HepG2 (cell line): ENCODE measurements at regions of chr11 and their contacts with region 1.

Region 1: DNA sequence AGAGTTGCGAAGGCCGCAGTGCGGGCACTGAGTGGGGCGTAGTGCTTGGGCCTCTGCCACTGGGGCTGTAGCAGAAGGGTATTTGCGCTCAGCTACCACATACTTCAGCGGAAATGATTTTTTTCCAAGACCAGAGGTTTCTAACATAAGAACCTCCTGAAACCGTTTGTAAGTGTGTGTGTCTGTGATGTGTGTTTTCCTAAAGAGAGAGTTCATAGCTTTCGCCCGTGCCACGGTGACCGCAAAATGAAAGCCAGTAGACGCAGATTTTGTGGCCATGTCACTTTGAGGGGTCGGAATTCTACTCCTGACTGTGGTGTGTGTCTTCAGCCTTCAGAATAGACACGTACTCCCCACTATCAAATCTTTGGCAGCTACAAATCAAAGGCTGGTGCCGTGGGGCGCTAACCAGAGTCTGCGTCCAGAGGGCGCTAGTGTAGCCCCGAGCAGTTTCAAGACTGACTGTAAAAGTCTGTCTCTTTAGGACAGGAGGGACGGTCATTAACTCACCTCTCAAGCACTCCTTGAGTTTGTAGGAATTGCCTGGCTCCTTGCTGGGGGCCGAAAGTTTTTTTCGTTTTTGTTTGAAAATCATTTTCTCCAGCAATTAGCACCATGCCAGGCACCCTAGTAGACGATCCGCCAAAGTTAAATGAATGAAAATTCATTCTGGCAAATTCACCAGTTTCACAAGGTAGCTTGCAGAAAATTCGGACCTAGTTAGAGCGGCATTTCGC is 2.5 kb upstream of the CALCA start:
- DNase-seq: peak; percentile 16
- ATAC-seq: peak; percentile 85
- H3K4me3 ChIP-seq: no peak overlapping the region
- H3K27ac ChIP-seq: no peak overlapping the region
- H3K4me1 ChIP-seq: no peaks in the 10 kb centered on the region
- H3K27me3 ChIP-seq: peaks cover 2 to 41% of the 10 kb centered on the region in 2 experiments; a peak in 4 of 5 replicates
- CTCF ChIP-seq: peak; percentile 70
- EP300 ChIP-seq: no peak
- POLR2A ChIP-seq: no peak
- RAD21 ChIP-seq: peak; percentile 16; the same call in 1 of the 2 replicates

Region 2: GRCh38 chr11:14881576-14882193 is 93.0 kb before region 1 on chr11:
- CTCF ChIA-PET with region 1: no interaction called
- POLR2A ChIA-PET with region 1: no interaction called
- in situ Hi-C with region 1: no loop called
- intact Hi-C with region 1: no loop called
- DNase-seq: no peak
- ATAC-seq: no peak
- H3K4me3 ChIP-seq: no peak overlapping the region
- H3K27ac ChIP-seq: no peak overlapping the region
- H3K4me1 ChIP-seq: peaks cover 11% of the 10 kb centered on the region
- H3K27me3 ChIP-seq: no peaks in the 10 kb centered on the region
- CTCF ChIP-seq: no peak
- EP300 ChIP-seq: no peak
- POLR2A ChIP-seq: no peak
- RAD21 ChIP-seq: no peak

Region 3: GRCh38 chr11:14892036-14892567 is 82.6 kb before region 1 on chr11 and contains the start of gene CYP2R1:
- CTCF ChIA-PET with region 1: no interaction called
- POLR2A ChIA-PET with region 1: no interaction called
- in situ Hi-C with region 1: no loop called
- intact Hi-C with region 1: no loop called
- DNase-seq: peak; percentile 87
- ATAC-seq: peak; percentile 100
- H3K4me3 ChIP-seq: peak within 1 kb of the TSS; percentile 13 to 61 (median 42); a peak in 5 of 6 replicates
- H3K27ac ChIP-seq: no peak within 1 kb of the TSS
- H3K4me1 ChIP-seq: peaks cover 7% of the 10 kb centered on the region
- H3K27me3 ChIP-seq: 0 out of 5 replicates have a peak, but pooled peaks cover 0 to 1% of the 10 kb centered on the region in 2 experiments
- CTCF ChIP-seq: 0 out of 2 replicates have a peak, but pooled peaks have one; percentile 22
- EP300 ChIP-seq: no peak
- POLR2A ChIP-seq: no peak
- RAD21 ChIP-seq: no peak
- total RNA-seq, gene CYP2R1: 0.60 TPM in 1 of 2 replicates, not detected in the other

Region 4: GRCh38 chr11:14904745-14905103 is 70.0 kb before region 1 on chr11:
- CTCF ChIA-PET with region 1: no interaction called
- POLR2A ChIA-PET with region 1: no interaction called
- in situ Hi-C with region 1: no loop called
- intact Hi-C with region 1: no loop called
- DNase-seq: no peak
- ATAC-seq: no peak
- H3K4me3 ChIP-seq: no peak overlapping the region
- H3K27ac ChIP-seq: no peak overlapping the region
- H3K4me1 ChIP-seq: peaks cover 23% of the 10 kb centered on the region
- H3K27me3 ChIP-seq: no peaks in the 10 kb centered on the region
- CTCF ChIP-seq: peak; percentile 49
- EP300 ChIP-seq: no peak
- POLR2A ChIP-seq: no peak
- RAD21 ChIP-seq: no peak

Region 5: GRCh38 chr11:14942745-14943144 is 31.9 kb before region 1 on chr11:
- CTCF ChIA-PET with region 1: no interaction called
- POLR2A ChIA-PET with region 1: no interaction called
- in situ Hi-C with region 1: no loop called
- intact Hi-C with region 1: loop called (anchors 1 kb)
- DNase-seq: no peak
- ATAC-seq: no peak
- H3K4me3 ChIP-seq: no peak overlapping the region
- H3K27ac ChIP-seq: no peak overlapping the region
- H3K4me1 ChIP-seq: no peaks in the 10 kb centered on the region
- H3K27me3 ChIP-seq: 0 out of 5 replicates have a peak, but pooled peaks cover 0 to 3% of the 10 kb centered on the region in 2 experiments
- CTCF ChIP-seq: no peak
- EP300 ChIP-seq: no peak
- POLR2A ChIP-seq: no peak
- RAD21 ChIP-seq: no peak

Region 6: GRCh38 chr11:15006139-15006759 is 31.6 kb after region 1 on chr11:
- CTCF ChIA-PET with region 1: interaction called, 3 read pairs
- POLR2A ChIA-PET with region 1: no interaction called
- in situ Hi-C with region 1: no loop called
- intact Hi-C with region 1: loop called (anchors 1 kb)
- DNase-seq: peak; percentile 46
- ATAC-seq: peak; percentile 83
- H3K4me3 ChIP-seq: no peak overlapping the region
- H3K27ac ChIP-seq: no peak overlapping the region
- H3K4me1 ChIP-seq: no peaks in the 10 kb centered on the region
- H3K27me3 ChIP-seq: no peaks in the 10 kb centered on the region
- CTCF ChIP-seq: peak; percentile 65
- EP300 ChIP-seq: no peak
- POLR2A ChIP-seq: no peak
- RAD21 ChIP-seq: no peak

Region 7: GRCh38 chr11:15038963-15039362 is 64.3 kb after region 1 on chr11:
- CTCF ChIA-PET with region 1: no interaction called
- POLR2A ChIA-PET with region 1: no interaction called
- in situ Hi-C with region 1: no loop called
- intact Hi-C with region 1: no loop called
- DNase-seq: no peak
- ATAC-seq: no peak
- H3K4me3 ChIP-seq: no peak overlapping the region
- H3K27ac ChIP-seq: no peak overlapping the region
- H3K4me1 ChIP-seq: no peaks in the 10 kb centered on the region
- H3K27me3 ChIP-seq: no peaks in the 10 kb centered on the region
- CTCF ChIP-seq: 0 out of 2 replicates have a peak, but pooled peaks have one; percentile 19
- EP300 ChIP-seq: no peak
- POLR2A ChIP-seq: no peak
- RAD21 ChIP-seq: no peak

Region 8: GRCh38 chr11:15074206-15075161 is 99.8 kb after region 1 on chr11:
- CTCF ChIA-PET with region 1: interaction called, 3 read pairs
- POLR2A ChIA-PET with region 1: no interaction called
- in situ Hi-C with region 1: no loop called
- intact Hi-C with region 1: loop called (anchors 1 kb)
- DNase-seq: peak; percentile 62
- ATAC-seq: peak; percentile 98
- H3K4me3 ChIP-seq: peak overlapping the region in 1 of 3 experiments; percentile 24; a peak in 1 of 6 replicates
- H3K27ac ChIP-seq: no peak overlapping the region
- H3K4me1 ChIP-seq: peaks cover 12% of the 10 kb centered on the region
- H3K27me3 ChIP-seq: peaks cover 5 to 30% of the 10 kb centered on the region in 2 experiments; a peak in 4 of 5 replicates
- CTCF ChIP-seq: peak; percentile 92
- EP300 ChIP-seq: no peak
- POLR2A ChIP-seq: no peak
- RAD21 ChIP-seq: peak; percentile 72

Region 9: DNA sequence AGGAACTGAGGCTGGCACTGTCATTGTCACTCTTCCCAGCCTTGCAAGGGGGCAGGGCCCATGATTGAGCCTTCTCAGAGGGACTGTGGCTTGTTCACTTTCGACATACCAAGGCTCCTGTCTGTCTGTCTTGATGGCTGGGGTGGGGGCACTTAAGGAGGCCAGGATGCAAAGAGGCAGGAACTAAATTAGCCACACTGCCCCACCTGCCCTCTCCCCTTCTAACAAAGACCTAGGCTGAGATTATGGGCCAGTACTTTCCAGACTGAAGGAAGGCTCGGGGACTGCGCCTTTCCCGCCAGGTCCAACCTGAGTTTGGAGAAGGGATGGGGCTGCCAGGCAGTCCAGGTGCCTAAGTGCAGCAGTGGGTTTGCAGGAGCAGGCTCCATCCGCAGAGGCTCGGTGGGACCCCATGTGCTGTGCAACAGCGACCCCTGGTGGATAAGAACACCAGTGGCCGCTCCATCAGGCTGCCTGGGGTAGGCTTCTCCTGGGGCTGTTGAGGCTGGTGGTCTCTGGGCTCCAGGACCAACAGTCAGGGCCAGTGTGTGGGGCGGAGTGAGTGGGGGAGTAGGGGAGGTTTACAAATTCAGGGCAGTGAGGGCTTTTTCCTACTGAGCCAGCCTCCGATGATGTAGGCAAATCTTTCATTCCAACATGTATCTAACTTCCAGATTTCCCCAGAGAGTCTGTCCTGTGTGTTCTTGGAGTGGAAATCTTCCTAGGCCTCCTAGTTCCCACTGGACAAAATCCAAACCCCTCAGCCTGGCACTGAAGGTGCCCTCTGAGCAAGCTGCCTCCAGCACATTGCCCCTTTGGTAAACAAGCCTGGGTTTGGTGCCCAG is 233.9 kb after region 1 on chr11:
- CTCF ChIA-PET with region 1: no interaction called
- POLR2A ChIA-PET with region 1: no interaction called
- in situ Hi-C with region 1: no loop called
- intact Hi-C with region 1: loop called (anchors 5 kb)
- DNase-seq: peak; percentile 52
- ATAC-seq: peak; percentile 99
- H3K4me3 ChIP-seq: no peak overlapping the region
- H3K27ac ChIP-seq: no peak overlapping the region
- H3K4me1 ChIP-seq: peaks cover 5% of the 10 kb centered on the region; the same call in 1 of the 2 replicates
- H3K27me3 ChIP-seq: no peaks in the 10 kb centered on the region
- CTCF ChIP-seq: peak; percentile 97
- EP300 ChIP-seq: no peak
- POLR2A ChIP-seq: no peak
- RAD21 ChIP-seq: peak; percentile 91